Activated T-helper 2 cell treated with anti-CD3 and anti-CD28 coated beads, Interferon-gamma antibody, Interleukin-2, Interleukin-4, amounts not matched to agents 10 μg/mL and 5 μg/mL and 100 μg/mL, durations not matched to agents 14 hours and 24 hours and 36 hours (primary cell): ENCODE measurements at regions of chr6 and their contacts with region 1.

Region 1: DNA sequence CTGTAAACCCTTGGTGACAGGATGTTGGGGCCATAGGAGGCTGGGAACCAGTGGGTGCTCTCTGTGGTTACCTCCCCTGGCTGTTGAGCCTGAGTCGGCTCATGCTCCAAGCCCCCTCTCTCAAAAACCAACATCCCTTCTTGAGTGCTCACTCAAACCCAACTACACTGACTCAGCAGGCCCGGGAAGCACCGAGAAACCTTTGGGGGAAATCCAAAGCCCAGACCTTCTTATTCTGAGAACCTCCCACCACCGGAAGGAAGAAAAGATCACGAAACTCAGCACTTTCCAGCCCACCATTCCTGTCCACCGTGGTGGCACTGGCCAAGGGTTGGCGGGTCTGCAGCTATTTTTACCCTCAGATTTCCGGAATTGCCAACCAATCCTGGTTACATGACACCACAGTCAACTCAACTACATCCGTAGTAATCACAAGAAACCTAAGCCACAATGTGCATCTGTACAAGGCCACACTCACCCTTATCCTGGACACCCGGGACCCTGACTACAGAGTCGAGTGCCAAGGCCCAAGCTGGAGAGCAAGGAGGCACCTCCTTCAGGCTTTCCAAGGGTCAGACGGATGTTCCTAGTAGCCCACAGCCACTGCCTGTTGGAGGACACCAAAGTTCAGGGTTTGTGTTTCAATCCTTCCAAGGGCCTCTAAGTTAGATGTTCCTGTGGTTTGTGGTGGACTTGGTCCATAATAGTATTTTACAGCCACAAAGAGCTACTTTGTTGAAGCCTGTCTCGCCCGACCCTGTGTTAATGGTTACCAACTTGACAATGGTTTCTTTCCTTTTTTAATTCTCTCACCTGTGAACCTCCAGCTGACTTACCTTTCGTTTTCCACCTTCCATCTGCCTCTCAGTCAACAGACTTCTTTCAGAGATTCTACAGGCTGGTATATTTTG is 317.0 kb downstream of the CDC5L start:
- DNase-seq: no peak
- H3K4me3 Mint-ChIP-seq: no peak overlapping the region
- H3K27ac Mint-ChIP-seq: peak overlapping the region; percentile 70
- H3K4me1 Mint-ChIP-seq: peaks cover 38% of the 10 kb centered on the region
- H3K27me3 Mint-ChIP-seq: no peaks in the 10 kb centered on the region

Region 2: GRCh38 chr6:44161997-44162338 is 542.5 kb before region 1 on chr6:
- intact Hi-C with region 1: no loop called
- DNase-seq: no peak
- H3K4me3 Mint-ChIP-seq: no peak overlapping the region
- H3K27ac Mint-ChIP-seq: peak overlapping the region; percentile 12
- H3K4me1 Mint-ChIP-seq: peaks cover 21% of the 10 kb centered on the region
- H3K27me3 Mint-ChIP-seq: peaks cover 17% of the 10 kb centered on the region

Region 3: DNA sequence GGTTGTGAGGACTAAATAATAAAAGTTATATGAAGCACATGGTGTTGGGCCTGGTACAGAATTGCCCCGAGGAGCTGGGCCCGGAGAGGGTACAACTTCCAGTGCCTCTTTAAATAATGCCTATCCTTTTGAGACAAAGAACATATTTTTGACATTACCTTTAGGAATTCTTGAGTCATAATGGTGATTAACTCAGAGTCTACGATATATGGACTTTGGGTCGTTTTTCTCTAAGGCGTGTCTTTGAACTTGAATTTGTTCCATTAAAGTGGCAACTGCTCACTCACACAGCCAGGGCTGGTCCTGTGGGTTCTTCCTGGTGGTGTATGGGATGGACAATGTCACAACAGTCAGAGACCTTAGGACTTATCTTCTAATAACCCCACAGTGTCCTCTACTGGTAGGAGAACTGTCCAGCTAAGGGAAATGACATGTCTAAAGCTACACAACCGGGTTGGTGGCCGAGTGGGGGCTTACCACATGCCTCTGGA is 210.4 kb before region 1 on chr6:
- intact Hi-C with region 1: no loop called
- DNase-seq: no peak
- H3K4me3 Mint-ChIP-seq: no peak overlapping the region
- H3K27ac Mint-ChIP-seq: no peak overlapping the region
- H3K4me1 Mint-ChIP-seq: no peaks in the 10 kb centered on the region
- H3K27me3 Mint-ChIP-seq: peaks cover 6% of the 10 kb centered on the region

Region 4: DNA sequence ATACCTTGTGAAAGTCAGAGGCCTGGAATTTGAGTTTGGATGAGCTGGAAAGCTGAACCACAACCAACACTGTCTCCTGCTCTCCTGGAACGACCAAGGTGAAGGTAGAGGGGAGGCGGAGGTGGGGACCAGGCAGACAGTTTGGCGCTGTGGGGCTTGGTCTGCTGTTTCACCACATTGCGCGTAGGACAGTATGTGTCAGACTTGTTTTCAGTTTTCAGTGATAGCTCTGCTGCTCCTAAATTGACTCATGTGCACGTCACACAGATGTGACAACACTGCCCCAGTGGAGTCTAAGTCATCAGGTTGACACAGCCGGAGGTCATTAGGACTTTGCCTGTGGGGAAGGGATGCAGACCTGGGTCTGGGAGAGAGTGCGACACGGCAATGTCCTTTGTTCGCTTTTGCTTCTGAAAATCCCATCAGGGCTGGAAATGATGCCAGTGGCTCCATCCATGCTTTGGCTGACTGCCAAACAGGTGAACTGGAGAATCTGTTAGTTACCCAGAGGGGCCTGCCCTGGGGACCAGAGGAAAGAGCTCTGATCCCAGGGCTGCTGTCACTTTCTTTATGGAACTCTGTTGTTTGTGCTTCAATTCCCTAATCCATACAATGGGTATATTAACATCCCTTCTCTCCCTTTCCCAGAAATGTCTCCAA is 61.5 kb before region 1 on chr6:
- intact Hi-C with region 1: loop called (anchors 1 kb)
- DNase-seq: peak; percentile 39
- H3K4me3 Mint-ChIP-seq: no peak overlapping the region
- H3K27ac Mint-ChIP-seq: peak overlapping the region; percentile 91
- H3K4me1 Mint-ChIP-seq: peaks cover 31% of the 10 kb centered on the region
- H3K27me3 Mint-ChIP-seq: no peaks in the 10 kb centered on the region

Region 5: DNA sequence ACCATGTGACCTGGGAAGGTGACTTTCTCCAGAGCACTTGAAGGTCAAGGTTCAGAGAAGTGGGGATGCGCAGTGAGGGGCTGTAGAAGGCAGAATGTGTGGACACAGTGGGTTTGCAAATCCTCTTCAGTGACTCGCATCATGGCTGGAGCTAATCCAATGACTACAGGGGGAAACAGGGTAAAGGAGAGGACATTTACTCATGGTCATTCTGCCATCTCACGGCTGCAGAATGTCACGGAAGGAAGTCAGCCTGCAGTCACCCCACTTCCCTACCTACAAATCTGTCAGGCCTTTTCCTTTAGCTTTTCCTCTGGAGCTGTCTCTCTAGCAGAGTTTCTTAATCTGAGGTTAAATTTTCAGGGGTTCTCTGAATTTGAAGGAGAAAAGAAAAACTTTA is 20.6 kb after region 1 on chr6:
- intact Hi-C with region 1: no loop called
- DNase-seq: no peak
- H3K4me3 Mint-ChIP-seq: no peak overlapping the region
- H3K27ac Mint-ChIP-seq: no peak overlapping the region
- H3K4me1 Mint-ChIP-seq: no peaks in the 10 kb centered on the region
- H3K27me3 Mint-ChIP-seq: peaks cover 4% of the 10 kb centered on the region